ENCODE measurements at regions of chr7 and their contacts with region 1.

Region 1: DNA sequence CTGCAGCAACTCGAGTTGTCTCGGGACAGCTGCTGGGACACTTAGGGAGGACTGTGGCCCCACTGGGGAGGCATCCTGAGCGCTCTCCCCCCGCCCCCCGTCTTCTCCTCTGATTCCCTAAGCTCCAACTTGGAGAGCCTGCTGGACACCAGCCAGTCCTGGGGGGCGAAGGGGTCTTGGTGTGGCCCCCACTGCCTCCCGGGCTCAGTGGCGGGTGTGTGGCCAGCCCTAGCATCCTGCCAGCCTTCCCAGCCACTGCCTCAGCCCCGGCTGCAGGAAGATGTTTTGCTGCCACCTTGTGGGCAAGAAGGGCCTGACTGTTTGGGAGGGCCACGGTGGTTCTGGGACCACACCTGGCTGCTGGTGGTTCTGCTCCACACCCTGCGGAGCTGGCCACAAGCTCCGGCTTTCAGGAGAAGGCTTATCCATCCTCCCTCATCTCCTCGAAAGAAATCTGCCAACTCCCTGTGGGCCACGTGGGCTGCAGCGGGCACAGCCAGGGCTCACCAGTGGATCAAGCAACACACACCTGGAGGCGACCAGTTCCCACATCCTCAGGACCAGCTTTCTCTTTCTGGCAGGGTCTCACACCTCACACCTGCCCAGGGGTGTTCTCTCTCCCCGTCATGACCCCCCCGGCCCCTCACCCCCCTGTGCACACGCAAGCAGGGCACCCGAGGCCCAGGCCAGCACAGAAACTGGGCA is 24.8 kb downstream of the AGAP3 start:
- DNase-seq: peak; percentile 89
- ATAC-seq: peak; percentile 56
- H3K4me3 Mint-ChIP-seq: no peak overlapping the region
- H3K27ac Mint-ChIP-seq: no peak overlapping the region
- H3K4me1 Mint-ChIP-seq: peaks cover 34% of the 10 kb centered on the region
- H3K27me3 Mint-ChIP-seq: peaks cover 9% of the 10 kb centered on the region
- CTCF ChIP-seq: peak; percentile 90

Region 2: DNA sequence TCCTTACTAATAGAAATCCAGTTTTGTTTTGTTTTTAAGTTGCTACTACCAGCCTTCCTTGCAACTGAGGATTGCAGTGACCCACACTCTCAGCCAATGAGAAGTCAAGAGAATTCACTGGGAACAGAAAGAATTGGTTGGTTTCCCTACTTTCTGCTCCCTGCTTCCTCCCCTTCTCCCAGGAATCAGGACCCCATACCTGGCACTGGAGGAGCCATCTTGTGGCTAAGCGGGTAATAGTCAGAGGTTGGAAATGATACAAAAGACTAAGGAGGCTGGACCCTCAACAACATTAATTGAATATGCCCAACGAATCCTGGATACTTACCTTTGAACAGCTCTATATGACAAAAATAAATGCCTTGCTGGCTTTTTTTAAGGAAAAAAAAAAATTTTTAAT is 304.2 kb before region 1 on chr7:
- CTCF ChIA-PET with region 1: no interaction called
- POLR2A ChIA-PET with region 1: no interaction called
- DNase-seq: no peak
- ATAC-seq: peak; percentile 57
- H3K4me3 Mint-ChIP-seq: no peak overlapping the region
- H3K27ac Mint-ChIP-seq: no peak overlapping the region
- H3K4me1 Mint-ChIP-seq: no peaks in the 10 kb centered on the region
- H3K27me3 Mint-ChIP-seq: peaks cover 42% of the 10 kb centered on the region
- CTCF ChIP-seq: no peak

Region 3: GRCh38 chr7:150945833-150946420 is 165.2 kb before region 1 on chr7:
- CTCF ChIA-PET with region 1: no interaction called
- POLR2A ChIA-PET with region 1: no interaction called
- DNase-seq: no peak
- ATAC-seq: no peak
- H3K4me3 Mint-ChIP-seq: no peak overlapping the region
- H3K27ac Mint-ChIP-seq: no peak overlapping the region
- H3K4me1 Mint-ChIP-seq: peaks cover 48% of the 10 kb centered on the region
- H3K27me3 Mint-ChIP-seq: peaks cover 6% of the 10 kb centered on the region
- CTCF ChIP-seq: no peak

Region 4: DNA sequence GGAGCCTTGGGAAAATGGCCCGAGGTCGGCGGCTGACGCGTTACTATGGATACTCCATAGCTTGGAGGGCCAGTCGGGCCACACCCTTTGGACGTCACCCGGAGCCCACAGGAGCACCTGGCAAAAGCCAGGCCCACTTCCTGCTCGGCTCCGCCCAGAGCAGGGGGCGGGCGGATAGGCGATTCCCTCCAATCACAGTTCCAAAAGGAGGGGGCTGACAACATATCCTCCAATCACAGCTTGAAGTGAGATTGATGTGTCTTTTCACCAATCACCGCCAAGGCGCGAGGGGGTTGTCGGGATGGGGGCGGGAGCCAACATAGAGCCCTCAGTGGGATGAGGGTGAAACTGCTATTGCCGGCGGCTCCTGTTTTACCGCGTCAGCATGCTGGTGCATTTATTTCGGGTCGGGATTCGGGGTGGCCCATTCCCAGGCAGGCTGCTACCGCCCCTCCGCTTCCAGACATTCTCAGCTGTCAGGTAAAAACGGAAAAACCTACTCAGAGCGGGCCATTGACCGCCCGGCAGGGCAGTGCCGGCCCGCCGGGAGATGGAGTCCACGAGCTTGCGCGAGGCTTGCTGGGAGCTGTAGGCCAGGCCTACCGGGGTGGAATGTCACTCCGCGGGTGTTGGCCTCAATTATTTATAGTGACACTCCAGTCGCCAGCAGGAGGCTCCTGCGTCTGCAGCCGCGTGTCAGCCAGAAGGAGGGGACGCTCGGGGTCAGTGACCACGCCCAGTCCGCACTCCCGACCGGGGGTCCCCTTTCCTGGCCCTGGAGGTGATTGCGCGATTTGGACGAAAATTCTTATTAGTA is 82.8 kb before region 1 on chr7 and contains the start of gene ABCB8:
- CTCF ChIA-PET with region 1: interaction called, 23 read pairs
- POLR2A ChIA-PET with region 1: no interaction called
- DNase-seq: peak; percentile 99
- ATAC-seq: peak; percentile 95
- H3K4me3 Mint-ChIP-seq: peak within 1 kb of the TSS; percentile 92
- H3K27ac Mint-ChIP-seq: peak within 1 kb of the TSS; percentile 99
- H3K4me1 Mint-ChIP-seq: peaks cover 24% of the 10 kb centered on the region
- H3K27me3 Mint-ChIP-seq: peaks cover 8% of the 10 kb centered on the region; the same call in 1 of the 2 replicates
- CTCF ChIP-seq: no peak
- total RNA-seq, gene ABCB8: 27.9 to 35.9 TPM (median 28.4 TPM) in 3 replicates

Region 5: DNA sequence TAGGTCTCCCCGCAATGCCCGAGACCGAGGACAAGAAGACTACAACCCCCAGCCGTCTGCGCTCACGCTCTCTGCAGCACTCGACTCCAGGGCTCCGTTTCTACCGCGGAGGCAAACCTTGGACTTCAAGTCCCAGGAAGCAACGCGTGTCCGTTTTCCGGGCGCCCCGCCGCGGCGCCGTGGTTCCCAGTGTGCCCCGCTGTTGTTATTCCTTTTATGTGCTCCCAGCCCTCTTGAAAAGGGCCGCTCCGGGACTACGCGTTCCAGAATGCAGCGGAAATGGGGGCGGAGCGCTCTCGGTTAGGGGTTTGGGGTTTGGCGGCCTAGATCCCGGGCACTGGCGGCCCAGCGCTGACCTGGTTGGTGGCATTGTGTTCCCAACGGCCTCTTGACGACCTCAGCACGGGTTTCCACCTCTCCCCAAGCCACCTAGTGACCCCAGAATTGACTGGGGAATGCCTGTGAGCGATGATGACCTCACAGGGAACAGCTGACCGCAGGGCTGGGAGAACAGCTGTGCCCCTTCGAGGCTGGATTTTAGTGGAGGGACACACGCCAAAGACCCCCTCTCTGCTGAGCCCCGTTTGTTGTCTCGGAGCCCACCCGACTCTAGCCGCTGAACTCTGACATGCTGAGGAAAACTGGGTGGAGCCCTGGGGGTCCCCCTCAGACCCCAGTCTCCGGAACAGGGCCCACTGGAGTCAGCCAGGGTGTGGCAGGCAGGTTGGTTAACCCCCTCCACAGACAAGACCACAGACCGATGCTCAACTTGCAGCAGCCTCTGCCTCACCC is 52.9 kb before region 1 on chr7:
- CTCF ChIA-PET with region 1: interaction called, 22 read pairs
- POLR2A ChIA-PET with region 1: no interaction called
- DNase-seq: peak; percentile 98
- ATAC-seq: peak; percentile 79
- H3K4me3 Mint-ChIP-seq: peak overlapping the region; percentile 98
- H3K27ac Mint-ChIP-seq: peak overlapping the region; percentile 93
- H3K4me1 Mint-ChIP-seq: peaks cover 38% of the 10 kb centered on the region
- H3K27me3 Mint-ChIP-seq: peaks cover 7% of the 10 kb centered on the region
- CTCF ChIP-seq: no peak

Region 6: GRCh38 chr7:151080522-151081169 is 30.4 kb before region 1 on chr7 and contains the start of gene FASTK:
- CTCF ChIA-PET with region 1: interaction called, 64 read pairs
- POLR2A ChIA-PET with region 1: interaction called, 5 read pairs
- DNase-seq: peak; percentile 84
- ATAC-seq: peak; percentile 45
- H3K4me3 Mint-ChIP-seq: peak within 1 kb of the TSS; percentile 87
- H3K27ac Mint-ChIP-seq: peak within 1 kb of the TSS; percentile 85; the same call in 1 of the 2 replicates
- H3K4me1 Mint-ChIP-seq: peaks cover 43% of the 10 kb centered on the region
- H3K27me3 Mint-ChIP-seq: peaks cover 3% of the 10 kb centered on the region; the same call in 1 of the 2 replicates
- CTCF ChIP-seq: no peak
- total RNA-seq, gene FASTK: 62.1 to 70.2 TPM (median 67.7 TPM) in 3 replicates

Region 7: GRCh38 chr7:151085691-151086620 is 25.1 kb before region 1 on chr7 and contains the start of gene AGAP3:
- CTCF ChIA-PET with region 1: interaction called, 118 read pairs
- POLR2A ChIA-PET with region 1: interaction called, 5 read pairs
- DNase-seq: peak; percentile 83
- ATAC-seq: peak; percentile 56
- H3K4me3 Mint-ChIP-seq: peak within 1 kb of the TSS; percentile 84
- H3K27ac Mint-ChIP-seq: peak within 1 kb of the TSS; percentile 67
- H3K4me1 Mint-ChIP-seq: peaks cover 40% of the 10 kb centered on the region
- H3K27me3 Mint-ChIP-seq: peaks cover 18% of the 10 kb centered on the region
- CTCF ChIP-seq: no peak
- total RNA-seq, gene AGAP3: 107 to 163 TPM (median 113 TPM) in 3 replicates